CD8-positive, alpha-beta memory T cell (primary cell): ENCODE measurements at regions of chr3 and their contacts with region 1.

Region 1: GRCh38 chr3:12841149-12841970 is at the start of gene RPL32:
- DNase-seq: peak; percentile 76 to 91 (median 88)
- H3K4me3 ChIP-seq: peak within 1 kb of the TSS; percentile 69
- H3K4me3 Mint-ChIP-seq: peak within 1 kb of the TSS; percentile 94 to 98 (median 97)
- H3K27ac ChIP-seq: peak within 1 kb of the TSS; percentile 99
- H3K27ac Mint-ChIP-seq: peak within 1 kb of the TSS; percentile 98 to 100 (median 100)
- H3K4me1 ChIP-seq: peaks cover 43% of the 10 kb centered on the region
- H3K4me1 Mint-ChIP-seq: peaks cover 36 to 51% (median 50%) of the 10 kb centered on the region in 3 donors
- H3K27me3 ChIP-seq: no peaks in the 10 kb centered on the region
- H3K27me3 Mint-ChIP-seq: peaks cover 0 to 1% of the 10 kb centered on the region in 2 donors
- total RNA-seq, gene RPL32: 2,528 to 2,642 TPM

Region 2: DNA sequence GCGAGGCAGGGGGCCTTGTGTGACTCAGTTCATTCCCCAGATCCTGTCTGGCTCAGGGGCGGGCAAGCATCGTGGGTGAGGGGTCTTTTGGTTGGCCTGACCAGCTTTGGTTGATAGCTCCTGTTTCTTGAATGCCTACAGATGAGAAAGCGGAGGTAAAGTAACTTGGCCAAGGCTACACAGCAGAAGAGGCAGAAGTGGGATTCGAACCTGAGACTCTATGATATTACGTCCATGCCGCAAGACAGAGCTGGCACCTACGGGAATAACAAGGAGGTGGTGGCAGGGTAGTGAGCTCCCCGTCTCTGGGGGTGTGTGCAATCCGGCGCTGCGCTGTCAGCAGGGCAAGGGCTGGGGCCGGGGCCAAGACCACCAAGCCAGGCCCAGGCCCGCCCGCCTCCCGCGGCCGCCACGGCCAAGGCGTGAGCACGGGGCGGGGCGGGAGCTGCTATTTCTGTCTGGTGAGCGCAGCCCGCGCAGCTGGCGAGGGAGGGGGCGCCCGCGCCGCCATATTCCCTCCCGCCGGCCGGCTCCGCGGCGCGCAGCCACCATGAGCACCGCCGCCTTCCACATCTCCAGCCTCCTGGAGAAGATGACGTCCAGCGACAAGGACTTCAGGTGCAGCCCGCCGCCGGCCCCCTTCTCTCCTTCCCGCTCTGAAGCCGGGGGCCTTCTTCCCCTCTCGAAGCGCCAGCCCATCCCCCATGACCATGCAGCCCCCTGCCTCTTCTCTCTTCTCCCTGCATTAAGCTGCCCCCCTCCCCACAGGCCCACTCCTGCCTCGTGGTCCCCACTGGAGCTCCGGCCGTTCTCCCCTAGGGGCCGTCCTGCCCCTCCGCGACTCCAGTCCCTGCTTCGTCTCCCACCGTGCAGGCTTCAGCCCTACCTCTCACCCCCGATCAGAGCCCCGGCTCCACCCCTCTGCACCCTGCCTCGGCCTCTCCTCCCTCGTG is 44.9 kb before region 1 on chr3 and contains the start of gene CAND2:
- CTCF ChIA-PET with region 1: interaction called, 13 read pairs
- POLR2A ChIA-PET with region 1: interaction called, 5 read pairs
- DNase-seq: peak in 4 of 5 donors; percentile 12 to 58 (median 39)
- H3K4me3 ChIP-seq: peak within 1 kb of the TSS; percentile 62
- H3K4me3 Mint-ChIP-seq: peak within 1 kb of the TSS; percentile 85 to 94 (median 89)
- H3K27ac ChIP-seq: peak within 1 kb of the TSS; percentile 47
- H3K27ac Mint-ChIP-seq: peak within 1 kb of the TSS in 6 of 8 donors; percentile 29 to 82 (median 78)
- H3K4me1 ChIP-seq: peaks cover 6% of the 10 kb centered on the region
- H3K4me1 Mint-ChIP-seq: peaks cover 8 to 23% (median 8%) of the 10 kb centered on the region in 3 donors
- H3K27me3 ChIP-seq: peaks cover 5% of the 10 kb centered on the region
- H3K27me3 Mint-ChIP-seq: peaks cover 9 to 19% of the 10 kb centered on the region in 2 donors
- total RNA-seq, gene CAND2: 1.0 to 1.1 TPM